ENCODE measurements at regions of chr14 and their contacts with region 1.

Region 1: GRCh38 chr14:92690171-92691036 is 58.0 kb downstream of the LGMN start:
- DNase-seq: no peak
- CTCF ChIP-seq: peak; percentile 73

Region 2: GRCh38 chr14:92471919-92472318 is 218.5 kb before region 1 on chr14:
- CTCF ChIA-PET with region 1: no interaction called
- POLR2A ChIA-PET with region 1: no interaction called
- DNase-seq: no peak
- CTCF ChIP-seq: no peak

Region 3: DNA sequence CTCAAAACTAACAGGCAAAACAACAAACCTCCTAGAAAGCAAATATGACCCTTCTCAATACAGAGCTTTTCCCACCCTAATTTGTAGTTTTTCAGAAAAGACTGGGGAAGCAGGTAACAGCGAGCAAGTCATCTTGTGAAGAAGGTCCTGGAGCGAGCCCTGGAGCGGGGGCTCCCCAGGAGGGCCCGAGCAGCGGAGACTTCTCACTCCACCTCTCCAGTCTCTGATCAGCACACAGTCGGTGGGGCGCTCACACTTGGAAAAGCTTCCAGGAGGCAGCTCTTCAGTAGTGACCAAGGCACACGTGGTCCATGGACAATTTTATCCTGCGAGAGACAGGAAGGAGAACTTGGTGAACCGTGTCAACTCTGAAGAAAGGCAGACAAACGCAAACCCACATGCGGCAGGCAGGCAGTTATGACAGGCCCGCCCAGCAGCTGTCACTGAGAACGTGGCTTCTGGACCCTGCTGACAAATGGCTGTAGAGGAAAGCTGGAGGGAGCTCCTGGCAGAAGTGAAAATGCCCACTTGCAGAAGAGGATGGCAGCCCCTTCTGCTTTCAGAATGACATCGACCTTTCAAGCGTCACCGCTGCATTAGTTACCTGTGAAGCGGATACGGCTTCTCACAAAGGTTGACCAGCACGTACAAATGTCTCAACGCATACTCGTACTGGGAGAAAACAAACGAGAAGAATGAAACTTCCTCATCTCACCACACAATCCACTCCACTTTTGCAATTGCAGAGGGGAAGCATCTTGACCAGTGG is 13.8 kb after region 1 on chr14:
- CTCF ChIA-PET with region 1: interaction called, 13 read pairs
- POLR2A ChIA-PET with region 1: no interaction called
- DNase-seq: peak; percentile 87
- CTCF ChIP-seq: no peak